ENCODE measurements at regions of chr4 and their contacts with region 1.

Region 1: DNA sequence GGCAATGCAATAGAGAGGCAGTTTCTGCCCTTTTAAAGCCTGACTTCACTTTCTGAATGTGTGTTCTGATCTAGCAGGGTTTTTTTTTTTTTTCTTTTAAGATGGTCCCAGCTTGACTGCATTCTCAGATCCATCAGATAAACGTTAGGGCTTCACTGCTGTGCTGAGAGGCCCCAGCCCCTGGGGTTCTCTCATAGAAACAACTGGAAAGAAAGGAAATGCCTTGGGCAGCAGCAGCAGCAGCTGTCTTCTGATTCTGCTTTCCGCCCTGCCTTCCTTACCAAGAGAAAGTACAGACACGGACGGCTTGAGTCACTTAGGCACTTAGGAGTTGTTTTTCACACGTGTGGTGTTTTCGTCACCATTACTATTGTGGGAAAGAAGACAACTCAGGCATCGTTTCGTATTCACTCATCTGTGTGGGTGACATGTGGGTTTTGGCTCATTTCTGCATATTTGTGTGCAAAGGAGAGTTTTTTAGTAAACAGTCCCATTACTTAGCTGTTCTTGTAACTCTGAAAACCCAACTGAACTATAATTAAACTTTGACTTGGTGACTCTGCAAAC is 172.0 kb downstream of the PTTG2 start:
- DNase-seq: peak; percentile 74
- H3K4me3 Mint-ChIP-seq: peak overlapping the region; percentile 2
- H3K27ac Mint-ChIP-seq: peak overlapping the region; percentile 93
- H3K4me1 Mint-ChIP-seq: peaks cover 63% of the 10 kb centered on the region
- H3K27me3 Mint-ChIP-seq: no peaks in the 10 kb centered on the region

Region 2: GRCh38 chr4:37686373-37687193 is 445.6 kb before region 1 on chr4 and contains the start of gene RELL1:
- intact Hi-C with region 1: loop called (anchors 1 kb)
- DNase-seq: peak; percentile 99
- H3K4me3 Mint-ChIP-seq: peak within 1 kb of the TSS; percentile 92
- H3K27ac Mint-ChIP-seq: peak within 1 kb of the TSS; percentile 97
- H3K4me1 Mint-ChIP-seq: peaks cover 34% of the 10 kb centered on the region
- H3K27me3 Mint-ChIP-seq: peaks cover 11% of the 10 kb centered on the region
- total RNA-seq, gene RELL1: 19.3 and 22.2 TPM in 2 replicates

Region 3: DNA sequence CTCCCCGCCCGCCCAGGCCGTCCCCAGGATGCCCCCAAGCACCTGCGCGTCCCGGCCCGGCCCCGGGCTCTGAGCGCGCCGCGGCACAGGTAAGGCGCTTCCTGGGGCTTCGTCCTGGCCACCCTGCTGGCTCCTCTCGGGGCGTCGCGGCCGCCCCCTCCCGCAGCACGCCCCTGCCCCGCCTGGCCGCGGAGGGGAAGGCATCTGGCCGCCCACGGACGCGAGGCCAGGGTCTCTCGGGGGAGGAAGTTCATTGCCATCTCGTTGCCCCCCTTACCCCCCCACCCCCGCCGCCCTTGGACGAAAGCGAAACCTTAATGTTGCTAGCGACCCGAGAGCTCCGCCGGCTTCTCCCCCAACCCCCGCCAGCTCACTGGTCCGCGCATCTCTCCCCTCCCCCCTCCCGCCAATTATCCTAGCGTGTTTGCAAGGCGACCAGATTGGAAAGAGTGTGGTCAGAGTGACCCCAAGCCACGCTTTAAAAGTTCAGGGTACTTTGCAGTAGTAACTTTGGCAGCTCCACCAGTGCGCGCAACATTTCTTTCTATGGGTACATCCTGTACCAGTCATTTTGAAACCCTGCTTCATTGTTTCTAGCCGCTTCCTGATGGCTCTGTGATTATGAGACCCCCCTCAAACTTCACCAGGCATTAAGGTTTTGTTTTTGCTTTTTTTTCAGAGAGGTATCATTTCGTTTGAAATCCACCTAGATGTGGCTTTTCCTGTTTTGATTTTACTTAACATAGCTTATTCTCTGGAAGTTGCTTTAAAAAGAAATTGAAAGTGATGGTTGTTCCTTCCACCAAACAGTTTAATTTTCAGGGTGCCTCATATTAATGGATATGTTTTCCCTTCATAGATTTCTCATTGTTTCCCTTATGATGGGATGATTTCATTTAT is 240.7 kb before region 1 on chr4:
- intact Hi-C with region 1: loop called (anchors 1 kb)
- DNase-seq: peak; percentile 63
- H3K4me3 Mint-ChIP-seq: peak overlapping the region; percentile 87
- H3K27ac Mint-ChIP-seq: peak overlapping the region; percentile 89
- H3K4me1 Mint-ChIP-seq: peaks cover 43% of the 10 kb centered on the region
- H3K27me3 Mint-ChIP-seq: peaks cover 10% of the 10 kb centered on the region

Region 4: GRCh38 chr4:38160487-38161207 is 28.5 kb after region 1 on chr4:
- intact Hi-C with region 1: loop called (anchors 1 kb)
- DNase-seq: peak; percentile 48
- H3K4me3 Mint-ChIP-seq: no peak overlapping the region
- H3K27ac Mint-ChIP-seq: peak overlapping the region; percentile 58
- H3K4me1 Mint-ChIP-seq: peaks cover 29% of the 10 kb centered on the region
- H3K27me3 Mint-ChIP-seq: peaks cover 15% of the 10 kb centered on the region

Region 5: GRCh38 chr4:38455092-38455862 is 323.1 kb after region 1 on chr4:
- intact Hi-C with region 1: loop called (anchors 10 kb)
- DNase-seq: no peak
- H3K4me3 Mint-ChIP-seq: no peak overlapping the region
- H3K27ac Mint-ChIP-seq: peak overlapping the region; percentile 74
- H3K4me1 Mint-ChIP-seq: peaks cover 45% of the 10 kb centered on the region
- H3K27me3 Mint-ChIP-seq: peaks cover 12% of the 10 kb centered on the region

Region 6: GRCh38 chr4:39032218-39033085 is 900.3 kb after region 1 on chr4 and contains the start of gene TMEM156:
- intact Hi-C with region 1: loop called (anchors 10 kb)
- DNase-seq: no peak
- H3K4me3 Mint-ChIP-seq: peak within 1 kb of the TSS; percentile 86
- H3K27ac Mint-ChIP-seq: peak within 1 kb of the TSS; percentile 80
- H3K4me1 Mint-ChIP-seq: peaks cover 45% of the 10 kb centered on the region
- H3K27me3 Mint-ChIP-seq: no peaks in the 10 kb centered on the region
- total RNA-seq, gene TMEM156: 17.6 and 17.8 TPM in 2 replicates